ENCODE measurements at regions of chr1 and their contacts with region 1.

Region 1: GRCh38 chr1:209190591-209191261 is 392.8 kb upstream of the CAMK1G start:
- DNase-seq: no peak
- ATAC-seq: no peak

Region 2: DNA sequence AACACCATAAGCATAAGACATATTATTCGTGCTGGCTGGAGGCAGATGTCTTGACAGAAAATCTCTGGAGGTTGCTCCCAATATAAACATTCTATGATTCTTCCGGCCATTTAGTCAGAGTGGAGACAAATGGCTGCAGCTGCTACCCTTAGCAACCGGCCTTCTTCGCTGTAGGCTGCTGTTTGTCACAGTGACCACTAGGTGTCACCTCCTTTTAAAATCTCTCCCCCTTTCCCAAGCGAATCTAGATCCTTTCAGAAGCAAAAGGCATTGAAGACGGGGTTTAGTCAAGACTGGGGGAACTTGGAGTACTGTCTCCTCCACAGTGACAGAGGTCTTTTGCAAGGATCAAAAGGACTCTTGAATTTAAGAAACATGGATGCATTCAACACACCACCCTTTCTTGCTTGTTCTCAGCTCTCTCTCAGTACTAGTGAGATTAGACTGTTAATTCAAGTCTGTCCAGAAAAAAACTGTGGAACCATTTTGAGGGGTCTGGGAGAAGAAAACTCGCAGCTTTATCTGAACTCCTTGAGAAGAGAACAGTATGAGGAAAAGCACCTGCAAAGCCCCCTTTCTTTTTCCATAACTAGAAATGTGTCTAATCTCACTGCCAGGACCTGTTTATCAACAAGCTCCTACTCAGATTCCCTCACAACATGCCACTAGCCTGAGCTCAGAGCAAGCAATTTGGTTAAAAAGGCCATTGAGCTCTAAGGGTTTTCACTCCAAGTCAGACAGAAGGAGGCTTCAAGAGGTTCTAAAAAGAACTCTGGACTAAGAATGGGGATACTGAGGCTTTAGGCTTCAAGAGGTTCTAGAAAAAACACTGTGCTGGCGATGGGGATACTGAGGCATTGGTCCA is 538.2 kb before region 1 on chr1:
- intact Hi-C with region 1: loop called (anchors 5 kb)
- DNase-seq: no peak
- ATAC-seq: peak; percentile 75

Region 3: DNA sequence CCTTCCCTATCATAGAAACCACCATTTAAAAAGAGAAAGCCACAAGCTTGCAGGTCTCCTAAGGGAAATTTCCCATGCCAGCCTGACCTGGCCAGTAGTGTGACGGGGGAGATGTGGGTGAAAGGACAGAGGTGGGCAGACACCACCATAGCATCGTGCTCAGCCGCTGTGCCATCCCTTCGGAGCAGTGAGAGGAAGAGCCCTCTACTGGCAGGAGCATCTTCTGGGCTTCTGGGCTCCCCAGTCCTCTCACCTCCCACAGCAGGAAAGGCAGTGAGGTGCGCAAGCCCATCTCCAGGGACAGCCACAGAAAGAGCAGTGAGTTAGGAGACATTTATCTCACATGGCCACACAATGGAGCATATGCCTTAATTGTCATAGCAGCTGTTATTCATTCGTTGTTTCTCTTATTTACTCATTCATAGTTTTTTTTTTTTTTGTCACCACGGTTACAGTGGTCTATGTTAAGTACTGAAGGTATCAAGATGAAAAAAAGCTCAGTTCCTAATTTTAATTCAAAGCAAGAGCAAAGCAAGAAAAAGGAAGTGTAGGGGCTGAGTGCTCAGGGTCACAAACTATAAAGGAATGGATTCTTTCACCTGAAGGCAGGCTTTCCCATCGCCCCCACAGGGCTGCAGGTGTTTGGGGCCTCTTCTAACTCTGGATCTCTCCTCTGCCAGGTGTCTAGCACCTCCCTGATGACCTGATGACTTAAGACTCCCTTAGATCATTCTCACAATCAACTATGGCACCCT is 343.9 kb after region 1 on chr1:
- intact Hi-C with region 1: no loop called
- DNase-seq: no peak
- ATAC-seq: no peak

Measured in Right ventricle myocardium inferior (tissue), 1 donor.